BJ (cell line): ENCODE measurements at regions of chr17 and their contacts with region 1.

Region 1: GRCh38 chr17:59914274-59914854 is 21.4 kb downstream of the RPS6KB1 start:
- DNase-seq: no peak
- H3K4me3 ChIP-seq: no peak overlapping the region
- H3K27me3 ChIP-seq: no peaks in the 10 kb centered on the region
- CTCF ChIP-seq: peak; percentile 54

Region 2: GRCh38 chr17:59466946-59467801 is 447.2 kb before region 1 on chr17:
- CTCF ChIA-PET with region 1: no interaction called
- POLR2A ChIA-PET with region 1: no interaction called
- DNase-seq: no peak
- H3K4me3 ChIP-seq: no peak overlapping the region
- H3K27me3 ChIP-seq: peaks cover 4% of the 10 kb centered on the region
- CTCF ChIP-seq: no peak

Region 3: GRCh38 chr17:59899103-59899502 is 15.3 kb before region 1 on chr17:
- CTCF ChIA-PET with region 1: interaction called, 12 read pairs
- POLR2A ChIA-PET with region 1: no interaction called
- DNase-seq: no peak
- H3K4me3 ChIP-seq: no peak overlapping the region
- H3K27me3 ChIP-seq: no peaks in the 10 kb centered on the region
- CTCF ChIP-seq: no peak

Region 4: DNA sequence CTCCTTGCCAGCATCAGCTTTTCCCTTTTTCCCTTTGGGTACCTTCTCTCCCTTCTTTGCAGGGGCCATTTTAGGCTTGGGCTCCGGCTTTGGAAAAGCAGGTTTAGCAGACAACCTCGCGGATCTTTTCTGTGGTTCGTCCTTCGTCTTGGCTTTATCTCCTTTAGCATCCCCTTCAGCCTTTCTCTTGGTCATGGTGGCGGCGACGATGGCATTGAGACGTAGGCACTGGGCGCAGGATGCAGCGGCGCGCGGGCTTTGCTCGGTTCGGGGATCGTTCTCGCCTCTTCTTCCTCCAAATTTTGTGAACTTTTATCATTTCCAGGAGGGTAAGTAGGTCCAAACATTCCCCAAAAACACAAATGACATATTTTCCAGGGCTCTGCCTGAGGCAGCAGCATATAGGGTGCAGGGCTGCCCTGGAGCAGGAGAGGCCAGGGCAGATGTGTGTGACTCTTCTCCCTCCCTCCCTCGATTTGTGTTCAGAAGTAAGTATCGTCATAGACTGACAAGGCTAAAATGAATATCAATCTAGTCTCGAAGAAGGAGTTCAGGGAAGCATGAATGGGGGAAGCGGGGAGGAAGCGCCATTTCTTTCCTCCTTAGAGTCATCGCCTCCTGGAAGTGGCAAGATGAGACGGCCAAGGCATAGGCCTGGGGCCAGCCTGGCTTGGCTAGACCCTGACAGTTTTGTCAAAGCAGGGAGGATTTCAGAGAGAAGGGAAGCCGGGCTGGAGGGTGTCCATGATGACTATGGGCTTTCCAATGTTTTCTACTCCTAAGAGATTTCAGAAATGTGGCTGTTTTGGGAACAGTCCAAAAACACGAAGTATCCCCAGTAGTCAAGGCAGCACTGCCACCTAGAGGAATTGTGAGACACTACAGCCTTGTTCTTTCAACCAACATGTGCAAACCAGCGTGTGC is 521.1 kb after region 1 on chr17:
- CTCF ChIA-PET with region 1: no interaction called
- POLR2A ChIA-PET with region 1: no interaction called
- DNase-seq: no peak
- H3K4me3 ChIP-seq: no peak overlapping the region
- H3K27me3 ChIP-seq: no peaks in the 10 kb centered on the region; the same call in 1 of the 2 replicates
- CTCF ChIP-seq: peak; percentile 83